ENCODE measurements at regions of chr7 and their contacts with region 1.

Region 1: GRCh38 chr7:87173471-87173870 is 21.2 kb downstream of the DMTF1 start:
- DNase-seq: no peak
- H3K4me3 ChIP-seq: no peak overlapping the region
- H3K27ac ChIP-seq: no peak overlapping the region
- H3K4me1 ChIP-seq: peaks cover 0 to 2% (median 0%) of the 10 kb centered on the region in 4 experiments
- H3K27me3 ChIP-seq: no peaks in the 10 kb centered on the region

Region 2: GRCh38 chr7:87003872-87004798 is 169.3 kb before region 1 on chr7:
- CTCF ChIA-PET with region 1: no interaction called
- POLR2A ChIA-PET with region 1: no interaction called
- DNase-seq: peak; percentile 14 to 72 (median 52)
- H3K4me3 ChIP-seq: peak overlapping the region in 4 of 7 experiments; percentile 6 to 67 (median 26)
- H3K27ac ChIP-seq: no peak overlapping the region
- H3K4me1 ChIP-seq: peaks cover 0 to 26% (median 3%) of the 10 kb centered on the region in 4 experiments
- H3K27me3 ChIP-seq: no peaks in the 10 kb centered on the region

Region 3: DNA sequence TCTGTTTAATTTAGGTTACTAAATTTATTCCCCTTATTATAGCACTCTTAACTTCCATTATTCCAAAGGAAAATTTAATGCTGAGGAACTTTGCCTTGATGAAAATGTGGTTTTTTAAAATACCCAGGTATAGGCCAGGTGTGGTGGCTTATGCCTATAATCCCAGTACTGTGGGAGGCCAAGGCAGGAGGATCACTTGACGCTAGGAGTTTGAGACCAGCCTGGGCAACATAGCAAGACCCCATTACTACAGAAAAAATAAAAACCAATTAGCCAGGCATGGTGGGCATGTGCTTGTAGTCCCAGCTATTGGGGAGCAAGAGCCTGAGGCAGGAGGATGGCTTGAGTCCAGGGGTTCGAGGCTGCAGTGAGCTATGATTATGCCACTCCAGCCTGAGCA is 13.6 kb after region 1 on chr7:
- CTCF ChIA-PET with region 1: interaction called, 12 read pairs
- POLR2A ChIA-PET with region 1: no interaction called
- DNase-seq: no peak
- H3K4me3 ChIP-seq: no peak overlapping the region
- H3K27ac ChIP-seq: no peak overlapping the region
- H3K4me1 ChIP-seq: no peaks in the 10 kb centered on the region
- H3K27me3 ChIP-seq: no peaks in the 10 kb centered on the region

Measured in common myeloid progenitor, CD34-positive (primary cell).